Sigmoid colon (tissue), 7 donors: ENCODE measurements at regions of chr14 and their contacts with region 1.

Region 1: GRCh38 chr14:45134051-45134958 is at the start of gene FKBP3:
- DNase-seq: peak; percentile 99
- H3K4me3 ChIP-seq: peak within 1 kb of the TSS; percentile 66 to 76 (median 72)
- H3K27ac ChIP-seq: peak within 1 kb of the TSS; percentile 86 to 89 (median 88)
- H3K4me1 ChIP-seq: peaks cover 0 to 31% (median 18%) of the 10 kb centered on the region in 4 donors
- H3K27me3 ChIP-seq: no peaks in the 10 kb centered on the region
- CTCF ChIP-seq: no peak
- EP300 ChIP-seq: no peak
- POLR2A ChIP-seq: peak; percentile 95
- total RNA-seq, gene FKBP3: 32.6 to 68.0 (median 56.8) TPM

Region 2: GRCh38 chr14:44897045-44897844 is 237.1 kb before region 1 on chr14:
- intact Hi-C with region 1: loop called (anchors 2 kb)
- DNase-seq: peak; percentile 99
- H3K4me3 ChIP-seq: peak overlapping the region; percentile 82 to 95 (median 87)
- H3K27ac ChIP-seq: peak overlapping the region; percentile 99 to 100 (median 99)
- H3K4me1 ChIP-seq: peaks cover 0 to 53% (median 34%) of the 10 kb centered on the region in 4 donors
- H3K27me3 ChIP-seq: no peaks in the 10 kb centered on the region
- CTCF ChIP-seq: no peak
- EP300 ChIP-seq: no peak
- POLR2A ChIP-seq: peak; percentile 66 to 75

Region 3: DNA sequence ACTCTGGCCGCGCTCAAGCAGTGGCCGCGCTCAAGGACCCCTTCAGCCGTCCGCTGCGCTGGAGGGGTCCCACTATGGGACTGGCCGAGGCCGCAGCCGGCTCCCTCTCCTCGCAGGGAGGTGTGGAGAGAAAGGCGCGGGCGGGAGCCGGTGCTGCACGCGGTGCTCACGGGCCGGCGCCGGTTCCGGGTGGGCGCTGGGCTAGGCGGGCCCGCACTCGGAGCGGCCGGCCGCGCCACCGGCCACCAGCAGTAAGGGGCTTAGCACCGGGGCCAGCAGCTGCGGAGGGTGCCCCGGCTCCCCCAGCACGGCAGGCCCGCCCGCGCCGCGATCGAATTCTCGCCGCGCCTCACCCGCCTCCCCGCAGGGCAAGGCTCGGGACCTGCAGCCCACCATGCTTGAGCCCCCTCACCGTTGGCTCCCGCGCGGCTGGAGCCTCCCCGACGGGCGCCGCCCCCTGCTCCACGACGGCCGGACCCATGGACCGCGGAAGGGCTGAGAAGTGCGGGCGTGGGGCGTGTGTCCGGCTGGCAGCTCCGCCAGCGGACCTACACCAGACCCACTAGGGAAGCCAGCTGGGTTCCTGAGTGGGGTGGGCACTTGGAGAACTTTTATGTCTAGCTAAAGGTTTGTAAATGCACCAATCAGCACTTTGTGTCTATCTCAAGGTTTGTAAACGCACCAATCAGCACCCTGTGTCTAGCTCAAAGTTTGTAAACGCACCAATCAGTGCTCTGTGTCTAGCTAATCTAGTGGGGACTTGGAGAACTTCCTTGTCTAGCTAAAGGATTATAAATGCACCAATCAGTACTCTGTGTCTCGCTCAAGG is 222.1 kb before region 1 on chr14:
- intact Hi-C with region 1: loop called (anchors 2 kb)
- DNase-seq: no peak
- H3K4me3 ChIP-seq: peak overlapping the region; percentile 45 to 67 (median 59)
- H3K27ac ChIP-seq: peak overlapping the region; percentile 2 to 47 (median 24)
- H3K4me1 ChIP-seq: peaks cover 0 to 16% (median 9%) of the 10 kb centered on the region in 4 donors
- H3K27me3 ChIP-seq: peaks cover 0 to 3% (median 0%) of the 10 kb centered on the region in 3 donors
- CTCF ChIP-seq: no peak
- EP300 ChIP-seq: no peak
- POLR2A ChIP-seq: no peak

Region 4: GRCh38 chr14:44961604-44962333 is 172.5 kb before region 1 on chr14 and contains the starts of genes KLHL28 and TOGARAM1:
- intact Hi-C with region 1: loop called (anchors 1 kb)
- DNase-seq: peak; percentile 99
- H3K4me3 ChIP-seq: peak within 1 kb of the TSS; percentile 59 to 86 (median 72)
- H3K27ac ChIP-seq: peak within 1 kb of the TSS; percentile 91 to 94 (median 92)
- H3K4me1 ChIP-seq: peaks cover 0 to 67% (median 56%) of the 10 kb centered on the region in 4 donors
- H3K27me3 ChIP-seq: no peaks in the 10 kb centered on the region
- CTCF ChIP-seq: no peak
- EP300 ChIP-seq: peak in 1 of 4 donors; percentile 78
- POLR2A ChIP-seq: peak; percentile 84 to 90
- total RNA-seq, gene KLHL28: 9.0 to 16.5 (median 11.3) TPM
- total RNA-seq, gene TOGARAM1: 14.3 to 27.1 (median 19.8) TPM

Region 5: DNA sequence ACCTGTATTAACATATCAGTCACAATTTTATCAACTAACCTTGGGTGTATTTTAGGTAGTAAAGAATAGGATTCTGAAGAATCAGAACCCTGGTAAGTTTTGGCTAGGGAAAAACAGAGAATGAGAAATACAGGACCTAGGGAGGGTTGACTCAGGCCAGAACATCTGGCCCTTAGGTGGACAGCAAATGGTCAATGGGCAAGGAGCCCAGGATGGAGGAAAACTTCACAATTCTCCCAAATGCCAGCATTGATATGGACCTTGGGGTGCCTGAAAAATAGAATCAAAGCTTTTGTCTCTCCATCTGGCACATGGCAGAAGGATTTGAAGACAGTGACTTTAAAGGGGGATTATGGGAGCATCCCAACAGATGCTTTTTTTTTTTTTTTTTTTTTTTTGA is 83.1 kb before region 1 on chr14:
- intact Hi-C with region 1: no loop called
- DNase-seq: no peak
- H3K4me3 ChIP-seq: no peak overlapping the region
- H3K27ac ChIP-seq: no peak overlapping the region
- H3K4me1 ChIP-seq: no peaks in the 10 kb centered on the region
- H3K27me3 ChIP-seq: no peaks in the 10 kb centered on the region
- CTCF ChIP-seq: no peak
- EP300 ChIP-seq: no peak
- POLR2A ChIP-seq: no peak

Region 6: DNA sequence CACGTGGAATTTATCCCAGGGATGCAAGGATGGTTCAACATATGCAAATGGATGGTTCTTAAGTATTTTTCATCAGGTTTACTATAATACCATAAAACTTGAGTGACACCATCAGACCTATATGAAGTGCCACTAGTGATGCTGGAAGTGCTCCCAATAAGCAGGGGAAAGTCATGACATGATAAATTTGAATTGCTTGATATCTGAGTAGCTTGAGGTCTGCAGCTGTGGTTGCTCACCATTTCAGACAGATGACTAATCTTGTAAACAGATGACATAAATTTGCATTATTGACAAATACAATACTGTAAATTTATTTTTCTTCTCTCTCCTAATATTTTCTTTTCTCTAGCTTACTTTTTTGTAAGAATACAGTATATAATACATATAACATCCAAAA is 64.1 kb before region 1 on chr14:
- intact Hi-C with region 1: no loop called
- DNase-seq: no peak
- H3K4me3 ChIP-seq: no peak overlapping the region
- H3K27ac ChIP-seq: no peak overlapping the region
- H3K4me1 ChIP-seq: peaks cover 0 to 16% (median 13%) of the 10 kb centered on the region in 4 donors
- H3K27me3 ChIP-seq: no peaks in the 10 kb centered on the region
- CTCF ChIP-seq: no peak
- EP300 ChIP-seq: no peak
- POLR2A ChIP-seq: no peak

Region 7: DNA sequence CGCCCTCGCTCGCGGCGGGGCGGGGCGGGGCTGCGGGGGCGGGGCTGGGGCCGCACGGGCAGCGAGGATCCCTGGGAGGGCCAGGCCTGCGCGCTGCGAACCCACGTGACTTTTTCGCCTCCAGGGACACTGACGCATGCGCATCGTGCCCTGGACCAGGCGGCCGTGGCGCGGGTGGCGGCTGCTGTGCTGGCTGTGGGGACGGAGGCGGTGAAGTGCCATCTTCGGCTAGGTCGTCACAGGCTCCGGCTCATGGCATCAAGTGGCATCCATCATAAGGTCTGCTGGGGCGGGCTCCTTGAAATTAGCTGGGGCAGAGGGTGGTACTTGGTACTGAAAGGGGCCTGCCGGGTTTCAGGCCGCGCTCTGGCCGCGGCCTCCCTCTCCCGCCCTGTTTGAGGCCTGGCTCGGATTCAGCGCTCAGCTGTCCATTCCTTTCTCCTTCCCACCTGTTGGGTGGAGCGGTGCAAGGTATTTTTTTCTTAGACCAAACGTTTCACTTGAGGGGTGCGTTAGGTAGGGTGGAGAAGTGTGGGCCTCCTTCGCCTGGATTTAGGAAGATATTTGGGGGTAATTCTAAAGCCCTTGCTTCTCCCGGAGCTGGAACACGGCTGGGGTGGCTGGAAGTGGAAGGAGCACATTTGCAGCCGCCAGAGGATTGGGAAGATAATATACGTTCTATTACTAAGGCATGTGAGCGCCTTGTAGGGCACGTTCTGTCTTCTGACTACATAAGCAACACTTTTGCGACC is 50.2 kb before region 1 on chr14 and contains the start of gene PRPF39:
- intact Hi-C with region 1: loop called (anchors 2 kb)
- DNase-seq: peak; percentile 96
- H3K4me3 ChIP-seq: peak within 1 kb of the TSS; percentile 56 to 73 (median 67)
- H3K27ac ChIP-seq: peak within 1 kb of the TSS; percentile 80 to 87 (median 84)
- H3K4me1 ChIP-seq: peaks cover 0 to 45% (median 34%) of the 10 kb centered on the region in 4 donors
- H3K27me3 ChIP-seq: no peaks in the 10 kb centered on the region
- CTCF ChIP-seq: peak in 1 of 4 experiments; percentile 10
- EP300 ChIP-seq: no peak
- POLR2A ChIP-seq: peak; percentile 88 to 89
- total RNA-seq, gene PRPF39: 23.2 to 41.0 (median 30.0) TPM

Region 8: DNA sequence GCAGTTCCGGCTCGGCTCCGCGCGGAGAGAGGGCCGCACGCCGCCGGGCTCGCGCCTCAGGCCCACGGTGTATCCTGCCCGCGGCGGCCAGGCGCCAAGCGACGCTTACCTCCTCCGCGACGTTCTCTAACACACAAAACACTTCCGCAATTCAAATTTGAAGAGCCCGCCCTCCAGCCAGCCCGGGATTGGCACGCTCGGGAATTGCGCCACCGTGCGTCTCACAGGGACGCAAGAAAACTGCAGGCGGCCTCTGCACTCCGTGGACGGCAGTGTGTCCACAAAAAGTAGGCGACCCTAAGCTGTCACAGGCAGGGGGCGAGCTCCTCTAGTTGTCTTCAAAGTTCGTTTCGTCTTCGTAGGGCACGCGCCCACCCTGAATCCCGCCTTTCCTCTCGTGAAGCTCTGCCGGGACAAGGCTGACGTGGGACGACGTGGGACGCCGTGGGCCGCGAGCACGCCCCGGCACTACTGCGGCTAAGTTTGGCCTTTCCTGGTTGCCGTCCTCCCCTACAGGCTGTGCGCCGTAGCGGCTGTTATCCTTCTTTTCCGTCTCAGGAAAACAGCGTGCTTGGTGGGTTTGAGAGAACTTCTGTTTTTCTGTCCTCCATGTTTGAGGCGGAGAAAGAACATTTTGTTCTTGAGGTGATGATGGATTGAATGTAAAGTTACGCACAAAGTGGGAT is 118.9 kb after region 1 on chr14 and contains the start of gene MIS18BP1:
- intact Hi-C with region 1: loop called (anchors 5 kb)
- DNase-seq: peak; percentile 96
- H3K4me3 ChIP-seq: peak within 1 kb of the TSS; percentile 71 to 79 (median 72)
- H3K27ac ChIP-seq: peak within 1 kb of the TSS; percentile 87 to 93 (median 91)
- H3K4me1 ChIP-seq: peaks cover 0 to 17% (median 11%) of the 10 kb centered on the region in 4 donors
- H3K27me3 ChIP-seq: no peaks in the 10 kb centered on the region
- CTCF ChIP-seq: peak; percentile 49 to 81 (median 67)
- EP300 ChIP-seq: peak in 1 of 4 donors; percentile 62
- POLR2A ChIP-seq: peak; percentile 25 to 45
- total RNA-seq, gene MIS18BP1: 15.0 to 43.8 (median 21.1) TPM

Region 9: DNA sequence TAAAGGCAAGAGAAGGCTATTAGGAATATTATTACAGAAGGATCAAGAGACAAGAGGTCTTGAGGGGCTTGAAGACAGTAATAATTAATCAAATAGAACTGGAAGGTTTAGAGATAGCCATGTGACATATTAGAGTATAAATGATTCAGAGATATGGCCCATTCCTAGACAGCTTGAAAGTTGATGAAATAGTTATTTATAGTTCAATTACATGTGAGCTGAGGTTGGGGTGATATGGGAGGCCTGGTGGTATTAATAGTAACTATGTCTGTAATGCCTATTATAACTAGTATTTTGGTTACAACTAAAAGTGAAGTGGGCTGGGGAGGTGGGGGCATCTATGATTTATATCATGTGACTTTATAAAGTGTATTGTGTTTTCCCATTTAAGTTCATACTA is 132.8 kb after region 1 on chr14:
- intact Hi-C with region 1: loop called (anchors 5 kb)
- DNase-seq: no peak
- H3K4me3 ChIP-seq: no peak overlapping the region
- H3K27ac ChIP-seq: no peak overlapping the region
- H3K4me1 ChIP-seq: no peaks in the 10 kb centered on the region
- H3K27me3 ChIP-seq: no peaks in the 10 kb centered on the region
- CTCF ChIP-seq: no peak
- EP300 ChIP-seq: no peak
- POLR2A ChIP-seq: no peak